Mammary epithelial cell (primary cell): ENCODE measurements at regions of chr17 and their contacts with region 1.

Region 1: DNA sequence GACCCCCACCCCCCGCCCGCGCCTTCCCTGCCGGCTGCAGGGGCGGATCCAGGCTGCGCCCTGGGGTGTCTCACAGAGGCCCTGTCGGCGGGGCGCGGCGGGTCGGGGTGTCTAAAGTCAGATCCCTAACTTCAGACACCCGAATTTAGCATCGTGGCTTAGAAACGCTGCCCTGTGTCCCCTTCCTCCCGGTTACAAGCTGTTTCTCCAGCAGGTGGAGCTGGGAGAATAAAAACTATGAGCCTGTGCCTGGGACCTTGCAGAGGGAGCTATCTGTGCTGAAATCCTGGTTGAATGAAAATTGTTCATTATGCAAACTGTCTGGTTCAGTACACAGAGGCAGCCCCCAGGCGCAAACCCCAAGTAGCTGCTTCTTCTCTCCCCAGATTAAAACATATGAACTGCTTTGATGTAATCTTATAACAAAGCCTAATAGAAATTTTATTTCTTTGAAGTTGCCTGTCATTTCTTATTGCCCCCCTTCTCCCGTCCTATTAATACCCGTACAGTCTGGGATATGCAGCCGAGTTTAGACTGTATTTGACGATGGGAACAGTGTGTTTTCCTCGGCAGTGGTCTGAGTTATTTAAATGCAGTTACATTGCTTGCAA is 79.0 kb downstream of the RPA1 start:
- DNase-seq: peak; percentile 54
- H3K4me3 ChIP-seq: no peak overlapping the region
- H3K27ac ChIP-seq: no peak overlapping the region
- H3K4me1 ChIP-seq: peaks cover 6% of the 10 kb centered on the region
- H3K27me3 ChIP-seq: peaks cover 2% of the 10 kb centered on the region
- CTCF ChIP-seq: peak; percentile 49 to 81

Region 2: DNA sequence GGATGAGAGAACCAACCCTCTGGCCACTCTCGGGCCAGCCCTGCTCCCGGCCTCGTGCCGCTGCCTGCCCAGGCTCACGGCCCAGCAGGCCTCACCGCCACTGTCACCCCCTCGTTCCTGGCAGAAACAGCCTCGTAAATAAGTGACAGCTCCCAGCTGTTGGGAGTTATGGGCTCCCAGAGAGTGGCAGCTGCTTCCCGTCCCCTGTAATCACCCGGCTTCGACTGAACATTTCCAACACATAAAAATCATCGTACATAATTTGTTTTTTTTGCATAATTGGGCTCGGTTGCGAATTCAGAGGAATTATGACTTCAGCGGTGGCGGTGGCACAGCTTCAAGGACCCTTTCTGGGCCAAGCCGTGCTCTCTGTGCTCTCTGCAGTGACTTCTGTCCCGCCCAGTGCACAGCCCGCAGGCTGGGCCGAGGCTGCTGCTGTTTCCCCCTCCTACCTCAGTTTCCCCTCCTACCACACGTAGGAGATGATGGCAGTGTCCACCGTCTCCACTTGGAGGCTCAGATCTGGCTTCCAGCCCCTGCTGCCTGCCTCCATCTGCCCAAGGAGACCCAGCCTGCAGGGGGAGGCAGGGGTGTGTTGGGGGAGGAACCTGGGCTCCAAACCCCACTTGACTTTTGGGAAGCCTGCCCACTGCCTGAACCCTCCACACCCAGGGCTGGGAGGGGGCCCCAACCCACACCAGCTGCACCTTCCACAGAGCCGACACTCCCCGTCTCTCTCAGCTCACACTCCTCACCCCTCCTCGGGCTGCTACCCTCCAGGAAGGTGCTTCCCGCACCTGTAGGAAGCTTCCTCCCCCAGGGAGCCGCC is 31.4 kb after region 1 on chr17:
- CTCF ChIA-PET with region 1: no interaction called
- dilution Hi-C with region 1: loop called (anchors 5 kb)
- in situ Hi-C with region 1: no loop called
- intact Hi-C with region 1: no loop called
- DNase-seq: no peak
- H3K4me3 ChIP-seq: no peak overlapping the region
- H3K27ac ChIP-seq: no peak overlapping the region
- H3K4me1 ChIP-seq: no peaks in the 10 kb centered on the region
- H3K27me3 ChIP-seq: no peaks in the 10 kb centered on the region
- CTCF ChIP-seq: no peak